ENCODE measurements at regions of chr15 and their contacts with region 1.

Region 1: DNA sequence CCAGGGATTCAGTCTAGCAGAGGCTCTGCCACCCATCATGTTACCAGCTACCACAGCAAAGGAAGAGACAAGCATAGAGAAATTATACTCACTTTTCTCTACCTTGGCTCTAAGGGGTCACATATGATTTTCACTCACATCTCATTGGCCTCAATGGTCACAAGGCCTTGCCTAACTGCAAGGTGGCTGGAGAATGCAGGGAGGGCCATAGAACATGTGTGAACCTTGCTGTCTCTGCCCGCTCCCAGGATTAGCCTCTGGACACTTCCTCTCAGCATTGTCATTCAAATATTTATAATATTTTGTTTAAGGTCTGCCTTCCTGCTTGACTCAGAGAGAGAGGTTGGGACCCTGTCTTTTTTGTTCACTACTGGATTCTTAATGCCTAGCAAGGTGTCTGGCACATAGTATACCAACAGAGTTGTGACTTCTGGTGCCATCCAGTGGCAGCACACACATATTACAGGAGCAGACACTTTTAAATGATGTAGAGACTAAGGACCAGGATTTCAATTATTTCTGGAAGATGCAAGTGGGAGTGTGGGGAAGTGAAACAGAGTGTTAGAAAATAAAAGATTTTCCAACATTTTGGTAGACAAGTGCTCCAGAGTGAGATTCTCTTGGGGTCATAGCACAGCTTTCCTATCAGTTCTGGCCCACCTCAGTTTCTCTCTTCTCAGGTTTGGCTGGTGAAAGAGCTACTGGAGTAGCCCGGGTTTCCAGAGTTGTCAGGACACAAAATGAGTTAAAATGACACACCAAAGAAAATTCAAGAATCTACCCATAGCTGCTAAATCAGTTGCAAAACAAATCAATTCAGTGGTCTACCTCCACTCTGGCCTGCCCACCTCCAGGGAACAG is 119.0 kb upstream of the RASGRP1 start:
- DNase-seq: peak; percentile 81
- H3K4me3 Mint-ChIP-seq: peak overlapping the region; percentile 54
- H3K27ac Mint-ChIP-seq: peak overlapping the region; percentile 99
- H3K4me1 Mint-ChIP-seq: peaks cover 75% of the 10 kb centered on the region
- H3K27me3 Mint-ChIP-seq: no peaks in the 10 kb centered on the region

Region 2: DNA sequence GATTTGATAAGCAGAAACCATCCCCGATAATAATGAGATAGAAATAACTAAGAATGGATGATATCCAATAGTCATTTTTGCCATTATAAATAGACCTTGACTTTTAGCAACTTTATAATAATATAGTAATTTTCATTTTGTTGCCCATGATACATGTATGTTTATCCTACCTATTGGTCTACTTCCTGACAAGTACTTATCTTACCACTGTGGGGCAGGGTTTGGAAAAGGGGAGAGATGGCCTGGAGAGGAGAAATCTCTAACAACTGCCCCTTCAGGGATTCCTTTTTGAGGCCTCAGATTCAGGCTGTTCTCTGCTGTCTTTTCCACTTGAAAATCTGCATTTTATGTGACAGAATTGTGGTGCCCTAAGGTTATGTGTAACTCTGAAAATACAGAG is 187.5 kb before region 1 on chr15:
- CTCF ChIA-PET with region 1: interaction called, 11 read pairs
- POLR2A ChIA-PET with region 1: interaction called, 5 read pairs
- DNase-seq: no peak
- H3K4me3 Mint-ChIP-seq: no peak overlapping the region
- H3K27ac Mint-ChIP-seq: no peak overlapping the region
- H3K4me1 Mint-ChIP-seq: peaks cover 28% of the 10 kb centered on the region
- H3K27me3 Mint-ChIP-seq: no peaks in the 10 kb centered on the region

Region 3: DNA sequence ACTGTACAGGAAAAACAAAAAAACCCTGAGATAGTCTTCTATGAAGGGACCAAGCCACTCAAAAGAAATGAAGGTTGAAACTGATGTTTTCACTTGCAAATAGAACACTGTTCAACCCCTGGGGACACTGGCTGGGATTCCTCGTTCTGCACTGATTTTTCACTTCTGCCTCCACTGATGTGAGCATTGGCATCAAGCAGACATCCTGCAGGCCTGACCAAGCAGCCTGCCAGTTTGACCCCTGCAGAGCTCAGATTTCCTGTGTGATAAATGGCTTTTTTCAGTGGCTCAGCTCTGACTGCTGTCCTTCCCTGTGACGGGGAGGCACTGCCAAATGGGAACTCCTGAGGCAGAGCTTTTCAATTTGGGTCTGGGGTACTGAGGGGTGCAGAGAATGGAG is 169.0 kb before region 1 on chr15:
- CTCF ChIA-PET with region 1: interaction called, 7 read pairs
- POLR2A ChIA-PET with region 1: interaction called, 11 read pairs
- DNase-seq: no peak
- H3K4me3 Mint-ChIP-seq: no peak overlapping the region
- H3K27ac Mint-ChIP-seq: peak overlapping the region; percentile 21
- H3K4me1 Mint-ChIP-seq: peaks cover 56% of the 10 kb centered on the region
- H3K27me3 Mint-ChIP-seq: no peaks in the 10 kb centered on the region

Region 4: DNA sequence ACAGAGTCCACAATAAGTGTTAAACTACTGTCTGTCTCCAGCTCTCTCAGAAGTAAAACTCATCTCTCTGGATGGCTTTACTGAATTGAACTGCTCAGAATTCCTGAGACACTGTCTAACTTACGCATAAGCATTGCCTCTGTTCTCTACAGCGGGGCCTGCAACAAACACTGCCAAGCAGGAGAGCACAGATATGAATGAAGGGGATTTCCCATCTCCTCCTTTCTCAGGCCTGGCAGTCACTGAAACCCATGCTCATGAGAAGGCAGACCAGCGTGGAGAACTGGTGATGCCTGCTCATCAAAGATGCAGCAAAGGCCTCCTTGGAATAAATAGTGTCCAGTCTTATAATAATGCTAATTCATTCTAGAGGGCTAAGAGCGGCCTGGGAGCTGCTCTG is 129.3 kb before region 1 on chr15:
- CTCF ChIA-PET with region 1: interaction called, 731 read pairs
- POLR2A ChIA-PET with region 1: interaction called, 1,063 read pairs
- DNase-seq: no peak
- H3K4me3 Mint-ChIP-seq: no peak overlapping the region
- H3K27ac Mint-ChIP-seq: peak overlapping the region; percentile 92
- H3K4me1 Mint-ChIP-seq: peaks cover 88% of the 10 kb centered on the region
- H3K27me3 Mint-ChIP-seq: no peaks in the 10 kb centered on the region

Region 5: GRCh38 chr15:38610748-38611147 is 72.9 kb before region 1 on chr15:
- CTCF ChIA-PET with region 1: interaction called, 17 read pairs
- POLR2A ChIA-PET with region 1: interaction called, 184 read pairs
- DNase-seq: peak; percentile 65
- H3K4me3 Mint-ChIP-seq: peak overlapping the region; percentile 61
- H3K27ac Mint-ChIP-seq: peak overlapping the region; percentile 99
- H3K4me1 Mint-ChIP-seq: peaks cover 71% of the 10 kb centered on the region
- H3K27me3 Mint-ChIP-seq: no peaks in the 10 kb centered on the region

Region 6: DNA sequence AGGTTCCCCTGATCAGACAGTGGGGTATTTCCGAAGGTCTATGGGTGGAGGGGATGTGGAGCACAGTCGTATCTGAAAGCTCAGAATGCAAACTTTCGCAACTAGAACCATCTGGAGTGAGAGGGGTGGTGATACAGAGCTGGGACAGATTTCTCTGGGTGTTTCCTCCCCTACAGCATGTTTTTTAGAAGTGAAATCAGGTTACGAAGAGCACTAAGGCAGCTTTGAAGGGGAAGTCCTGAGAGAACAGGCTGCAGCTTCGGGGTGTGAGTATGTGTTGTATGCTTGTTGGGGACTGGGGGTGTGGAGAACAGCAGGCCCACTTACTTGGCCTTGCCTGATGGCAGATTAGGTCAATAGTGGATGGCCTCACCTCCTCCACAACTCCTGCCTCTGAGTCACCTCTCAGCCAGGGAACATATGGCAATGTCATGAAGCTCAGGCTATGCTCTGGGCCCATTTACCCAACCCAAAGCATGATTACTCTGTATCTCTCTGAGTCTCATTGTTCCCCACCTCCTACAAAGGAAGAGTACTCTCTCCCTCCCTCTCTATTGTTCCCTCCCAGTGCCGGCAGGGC is 11.8 kb before region 1 on chr15:
- CTCF ChIA-PET with region 1: interaction called, 139 read pairs
- POLR2A ChIA-PET with region 1: interaction called, 344 read pairs
- DNase-seq: peak; percentile 52
- H3K4me3 Mint-ChIP-seq: peak overlapping the region; percentile 56
- H3K27ac Mint-ChIP-seq: peak overlapping the region; percentile 97
- H3K4me1 Mint-ChIP-seq: peaks cover 81% of the 10 kb centered on the region
- H3K27me3 Mint-ChIP-seq: no peaks in the 10 kb centered on the region

Region 7: DNA sequence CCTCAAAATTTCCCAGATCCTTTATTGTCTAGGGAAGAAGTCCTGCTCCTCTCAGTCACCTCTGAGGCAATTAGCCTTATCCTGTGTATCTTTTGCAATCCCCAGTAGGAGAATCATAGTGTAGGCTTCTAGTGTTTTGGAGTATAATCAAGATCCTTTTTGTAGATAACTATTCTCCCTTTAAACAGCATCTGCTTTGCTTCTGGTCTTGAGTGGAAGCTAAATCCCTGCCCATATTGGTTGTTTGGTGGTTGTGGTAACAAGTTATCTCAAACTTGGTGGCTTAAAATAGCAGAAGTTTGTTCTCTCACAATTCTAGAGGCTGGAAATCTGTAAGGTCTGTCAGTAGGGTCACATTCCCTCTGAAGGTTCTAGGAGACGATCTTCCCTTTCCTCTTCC is 98.5 kb after region 1 on chr15:
- CTCF ChIA-PET with region 1: no interaction called
- POLR2A ChIA-PET with region 1: no interaction called
- DNase-seq: no peak
- H3K4me3 Mint-ChIP-seq: no peak overlapping the region
- H3K27ac Mint-ChIP-seq: no peak overlapping the region
- H3K4me1 Mint-ChIP-seq: no peaks in the 10 kb centered on the region
- H3K27me3 Mint-ChIP-seq: no peaks in the 10 kb centered on the region